ENCODE measurements at regions of chr13 and their contacts with region 1.

Region 1: DNA sequence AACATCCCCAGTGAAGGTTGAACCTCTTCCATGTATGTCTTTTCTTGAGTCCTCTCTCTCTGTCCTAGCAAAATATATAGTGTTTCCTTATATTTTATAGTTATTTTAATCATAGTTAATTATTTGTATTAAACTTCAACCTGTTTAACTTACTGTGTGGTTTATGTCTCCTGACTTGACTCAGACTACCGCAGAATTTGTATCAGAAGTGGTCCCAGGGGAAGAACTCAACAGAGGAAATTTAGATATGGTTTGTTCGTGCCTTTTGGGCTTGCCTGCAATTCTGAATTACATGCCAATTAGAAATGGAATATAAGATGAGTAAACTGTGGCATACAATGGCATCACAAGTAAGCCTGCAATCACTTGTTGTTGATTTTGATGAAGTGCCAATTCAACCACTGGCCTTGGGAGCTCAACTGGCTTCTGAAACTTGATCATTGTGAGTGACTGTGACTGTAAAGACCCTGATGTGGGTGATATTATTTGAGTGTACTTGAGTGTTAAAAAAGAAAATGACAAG is 1459.5 kb upstream of the PCDH20 start:
- DNase-seq: no peak
- ATAC-seq: no peak
- H3K4me3 ChIP-seq: no peak overlapping the region
- H3K4me3 Mint-ChIP-seq: no peak overlapping the region
- H3K27ac ChIP-seq: no peak overlapping the region
- H3K27ac Mint-ChIP-seq: no peak overlapping the region
- H3K4me1 ChIP-seq: no peaks in the 10 kb centered on the region
- H3K4me1 Mint-ChIP-seq: no peaks in the 10 kb centered on the region
- H3K27me3 ChIP-seq: no peaks in the 10 kb centered on the region
- H3K27me3 Mint-ChIP-seq: no peaks in the 10 kb centered on the region
- CTCF ChIP-seq: no peak

Region 2: GRCh38 chr13:62887046-62887445 is 11.9 kb after region 1 on chr13:
- CTCF ChIA-PET with region 1: no interaction called
- POLR2A ChIA-PET with region 1: no interaction called
- intact Hi-C with region 1: loop called in 1 of 2 experiments (anchors 2 kb)
- DNase-seq: peak in 1 of 9 experiments; percentile 0
- ATAC-seq: no peak
- H3K4me3 ChIP-seq: no peak overlapping the region
- H3K4me3 Mint-ChIP-seq: no peak overlapping the region
- H3K27ac ChIP-seq: no peak overlapping the region
- H3K27ac Mint-ChIP-seq: no peak overlapping the region
- H3K4me1 ChIP-seq: no peaks in the 10 kb centered on the region
- H3K4me1 Mint-ChIP-seq: no peaks in the 10 kb centered on the region
- H3K27me3 ChIP-seq: no peaks in the 10 kb centered on the region
- H3K27me3 Mint-ChIP-seq: no peaks in the 10 kb centered on the region
- CTCF ChIP-seq: no peak

Measured in CD8-positive, alpha-beta T cell (primary cell).